ENCODE measurements at regions of chr18 and their contacts with region 1.

Region 1: GRCh38 chr18:79378542-79379250 is 17.0 kb upstream of the NFATC1 start:
- DNase-seq: peak; percentile 92
- ATAC-seq: peak; percentile 84
- H3K4me3 Mint-ChIP-seq: peak overlapping the region; percentile 67
- H3K27ac Mint-ChIP-seq: peak overlapping the region; percentile 97
- H3K4me1 Mint-ChIP-seq: peaks cover 11% of the 10 kb centered on the region
- H3K27me3 Mint-ChIP-seq: 0 out of 2 replicates have a peak, but pooled peaks cover 4% of the 10 kb centered on the region
- CTCF ChIP-seq: peak; percentile 89

Region 2: DNA sequence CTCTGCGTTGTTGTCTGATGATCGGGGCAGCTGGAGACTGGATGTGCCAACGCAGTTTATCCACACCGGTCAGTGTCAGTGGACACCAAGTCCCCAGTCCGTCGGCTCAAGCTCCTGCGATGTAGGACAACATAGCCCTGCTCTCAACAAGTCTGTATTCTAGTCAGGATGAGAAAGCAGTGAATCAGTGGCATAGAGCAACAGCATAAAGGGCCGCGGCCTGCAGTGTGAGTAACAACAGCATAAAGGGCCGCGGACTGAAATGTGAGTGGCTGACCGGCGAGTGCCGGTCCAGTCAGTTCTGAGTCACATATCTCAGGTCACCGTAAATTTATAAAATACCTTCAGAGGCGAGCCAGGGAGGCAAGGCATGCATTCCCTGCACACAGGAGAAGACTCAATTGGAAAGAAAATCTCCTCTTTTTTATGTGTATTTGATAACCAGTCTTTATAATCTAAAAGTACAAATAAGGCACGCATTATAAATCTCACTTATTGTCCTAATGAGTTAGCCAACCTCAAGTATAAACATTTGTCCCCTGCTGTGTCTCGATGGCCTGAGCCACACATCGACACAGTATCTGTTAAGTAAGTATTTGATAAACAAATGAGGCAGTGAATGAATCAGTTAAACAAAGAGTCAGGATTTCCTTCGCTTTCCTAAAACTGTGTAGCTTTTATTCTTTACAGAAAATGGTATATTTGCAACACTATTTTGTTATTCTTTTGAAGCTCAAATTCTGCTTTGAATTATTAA is 16.8 kb before region 1 on chr18:
- CTCF ChIA-PET with region 1: interaction called, 10 read pairs
- POLR2A ChIA-PET with region 1: no interaction called
- DNase-seq: no peak
- ATAC-seq: no peak
- H3K4me3 Mint-ChIP-seq: no peak overlapping the region
- H3K27ac Mint-ChIP-seq: no peak overlapping the region
- H3K4me1 Mint-ChIP-seq: peaks cover 10% of the 10 kb centered on the region
- H3K27me3 Mint-ChIP-seq: no peaks in the 10 kb centered on the region
- CTCF ChIP-seq: no peak

Region 3: GRCh38 chr18:79528846-79529245 is 150.2 kb after region 1 on chr18:
- CTCF ChIA-PET with region 1: interaction called, 12 read pairs
- POLR2A ChIA-PET with region 1: no interaction called
- DNase-seq: peak; percentile 81
- ATAC-seq: peak; percentile 68
- H3K4me3 Mint-ChIP-seq: no peak overlapping the region
- H3K27ac Mint-ChIP-seq: no peak overlapping the region
- H3K4me1 Mint-ChIP-seq: peaks cover 6% of the 10 kb centered on the region; the same call in 1 of the 2 replicates
- H3K27me3 Mint-ChIP-seq: peaks cover 7% of the 10 kb centered on the region
- CTCF ChIP-seq: peak; percentile 81

Region 4: DNA sequence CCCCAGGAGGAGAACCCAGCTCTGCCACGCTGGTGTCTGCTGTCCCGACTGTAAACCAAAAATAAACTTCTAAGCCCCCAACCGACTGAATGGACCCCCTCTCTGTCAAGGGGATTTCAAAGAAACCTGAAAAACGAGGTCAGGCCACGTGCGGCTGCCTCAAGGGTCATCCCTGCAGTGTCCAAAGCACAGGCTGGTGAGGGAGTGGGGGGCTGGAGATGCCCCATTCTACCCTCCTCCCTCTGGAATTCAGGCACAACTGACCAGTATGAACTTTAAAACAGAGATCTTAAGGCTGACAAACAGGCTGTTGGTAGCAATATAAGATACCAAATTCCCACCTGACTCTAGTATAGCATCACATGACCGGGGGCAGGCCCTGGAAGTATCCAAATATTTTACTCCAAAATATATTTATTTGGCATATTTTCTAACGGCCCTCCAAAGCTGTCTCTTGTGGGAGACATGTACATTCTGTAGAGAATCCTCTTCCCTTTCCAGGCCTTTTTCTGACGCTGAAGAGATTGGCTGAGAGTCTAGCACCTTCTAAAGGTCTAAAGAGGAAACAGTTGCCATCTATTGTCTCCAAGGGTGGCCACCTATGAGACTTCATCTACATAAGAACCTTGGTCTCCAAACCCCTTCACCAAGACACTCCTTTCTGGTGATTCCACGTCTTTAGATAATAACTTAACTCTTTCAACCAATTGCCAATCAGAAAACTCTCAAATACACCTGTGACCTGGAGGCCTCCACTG is 260.6 kb after region 1 on chr18:
- CTCF ChIA-PET with region 1: interaction called, 13 read pairs
- POLR2A ChIA-PET with region 1: interaction called, 3 read pairs
- DNase-seq: no peak
- ATAC-seq: no peak
- H3K4me3 Mint-ChIP-seq: no peak overlapping the region
- H3K27ac Mint-ChIP-seq: 0 out of 2 replicates have a peak overlapping the region, but pooled peaks have one; percentile 32
- H3K4me1 Mint-ChIP-seq: no peaks in the 10 kb centered on the region
- H3K27me3 Mint-ChIP-seq: peaks cover 14% of the 10 kb centered on the region
- CTCF ChIP-seq: no peak

Measured in WTC11 (cell line).